Activated CD4-positive, alpha-beta T cell treated with anti-CD3 and anti-CD28 coated beads, Interleukin-2, amount 10 ng/mL, durations not matched to agents 24 days and 14 days (primary cell): ENCODE measurements at regions of chr9 and their contacts with region 1.

Region 1: DNA sequence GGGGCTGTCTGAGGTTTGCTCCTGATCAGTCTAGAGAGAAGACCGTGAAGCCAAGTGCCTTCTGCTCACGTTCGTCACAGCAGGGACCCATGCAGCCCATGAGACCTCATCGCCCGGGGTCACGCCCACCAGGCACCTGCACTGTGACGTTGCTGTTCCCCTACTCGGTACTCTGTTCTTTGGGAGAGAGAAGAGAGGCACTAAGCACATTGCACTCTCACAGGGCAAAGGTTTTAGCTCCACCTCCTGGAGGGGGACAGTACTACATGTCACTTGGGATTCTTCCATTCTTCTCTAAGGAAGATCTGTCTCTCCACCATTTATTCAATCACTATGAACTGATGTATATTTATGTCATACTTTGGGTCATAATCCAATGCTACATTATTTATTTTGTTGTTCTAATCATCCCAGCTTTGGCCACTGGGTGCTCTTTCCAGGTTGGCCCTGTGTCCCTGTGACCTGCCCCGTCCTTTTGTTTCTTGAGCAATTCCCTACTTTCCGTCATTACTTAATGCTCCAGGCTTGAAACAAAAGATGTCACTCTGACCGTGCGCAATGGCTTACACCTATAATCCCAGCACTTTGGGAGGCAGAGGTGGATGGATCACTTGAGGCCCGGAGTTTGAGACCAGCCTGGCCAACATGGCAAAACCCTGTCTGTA is 31.4 kb upstream of the BRD3 start:
- DNase-seq: peak; percentile 90
- H3K4me3 Mint-ChIP-seq: no peak overlapping the region
- H3K27ac Mint-ChIP-seq: no peak overlapping the region
- H3K4me1 Mint-ChIP-seq: peaks cover 3% of the 10 kb centered on the region
- H3K27me3 Mint-ChIP-seq: peaks cover 3% of the 10 kb centered on the region

Region 2: DNA sequence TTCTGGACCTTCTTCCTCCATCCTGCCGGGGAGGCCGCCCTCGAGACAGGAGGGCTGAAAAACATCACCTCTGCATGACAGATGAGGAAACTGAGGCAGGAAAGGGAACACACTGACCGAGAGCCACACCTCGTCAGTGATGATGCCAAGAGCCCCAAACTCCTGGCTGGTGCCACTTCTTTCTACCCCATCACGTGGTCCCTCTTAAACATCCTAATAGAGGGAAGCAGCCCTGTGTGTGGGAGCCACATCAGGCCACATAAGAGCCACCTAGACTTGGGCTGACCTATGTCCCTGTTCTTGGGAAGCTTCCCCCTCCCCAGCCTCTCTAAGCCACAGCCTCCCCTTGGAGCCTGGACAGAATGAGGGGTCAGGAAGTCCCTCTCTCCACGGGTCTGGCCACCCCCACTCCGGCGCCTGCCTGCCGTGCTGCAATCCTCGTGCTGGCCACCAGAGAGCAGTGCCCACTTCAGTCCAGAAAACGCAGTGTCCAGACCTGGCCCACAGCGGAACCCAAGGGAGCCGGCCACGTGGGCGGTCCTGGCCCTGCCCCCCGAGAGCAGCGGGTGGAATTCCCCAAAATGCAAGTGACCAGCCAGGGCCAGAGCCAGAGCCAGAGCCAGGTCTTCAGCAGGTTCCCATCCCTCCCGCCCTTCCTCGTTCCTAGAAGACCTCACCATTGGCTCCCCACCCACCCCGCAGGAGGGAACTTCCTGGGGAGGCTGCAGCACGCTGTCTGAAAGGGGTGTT is 306.4 kb before region 1 on chr9:
- intact Hi-C with region 1: loop called (anchors 1 kb)
- DNase-seq: peak; percentile 86
- H3K4me3 Mint-ChIP-seq: no peak overlapping the region
- H3K27ac Mint-ChIP-seq: no peak overlapping the region
- H3K4me1 Mint-ChIP-seq: peaks cover 2% of the 10 kb centered on the region
- H3K27me3 Mint-ChIP-seq: peaks cover 2% of the 10 kb centered on the region

Region 3: GRCh38 chr9:134067904-134068743 is 31.1 kb before region 1 on chr9 and contains the start of gene BRD3:
- intact Hi-C with region 1: loop called (anchors 2 kb)
- DNase-seq: peak; percentile 96
- H3K4me3 Mint-ChIP-seq: peak within 1 kb of the TSS; percentile 95
- H3K27ac Mint-ChIP-seq: peak within 1 kb of the TSS; percentile 98
- H3K4me1 Mint-ChIP-seq: peaks cover 24% of the 10 kb centered on the region
- H3K27me3 Mint-ChIP-seq: peaks cover 24% of the 10 kb centered on the region
- total RNA-seq, gene BRD3: 32.3 and 40.9 TPM in 2 replicates